ENCODE measurements at regions of chr10 and their contacts with region 1.

Region 1: DNA sequence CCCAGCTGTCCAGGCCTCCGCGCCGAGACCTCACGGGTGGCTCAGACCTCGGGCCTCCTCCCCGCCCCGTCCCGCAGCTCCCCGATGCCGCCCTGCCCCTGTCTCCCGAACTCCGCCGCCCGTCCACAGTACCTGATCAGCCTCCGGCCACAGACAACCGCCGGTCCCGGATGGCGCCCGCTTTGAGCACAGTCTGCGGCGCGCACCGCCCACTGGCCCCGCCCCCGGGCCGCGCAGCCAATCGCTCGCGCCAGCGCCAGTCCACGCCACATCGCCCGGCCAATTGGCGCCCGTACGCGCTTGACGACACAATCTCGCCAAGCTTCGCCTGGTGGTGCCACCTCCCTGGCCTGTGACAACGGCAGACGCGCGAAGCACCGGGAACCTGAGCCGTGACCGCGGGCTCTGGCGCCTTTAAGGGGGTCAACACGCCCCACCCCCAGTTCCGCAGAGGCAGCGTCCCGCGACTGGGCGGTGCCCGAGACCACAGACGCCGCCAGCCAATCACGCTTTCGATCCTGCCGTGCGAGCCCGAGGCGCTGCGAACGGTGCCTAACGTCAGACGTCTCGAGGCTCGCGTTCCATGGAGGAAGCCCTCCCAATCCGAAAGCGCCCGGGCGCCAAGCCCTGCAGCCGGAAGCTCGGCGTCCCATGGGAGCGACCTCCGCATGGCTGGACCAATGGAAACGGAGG is at the start of gene IDI1:
- DNase-seq: peak; percentile 97 to 99 (median 98)
- H3K4me3 ChIP-seq: peak within 1 kb of the TSS; percentile 66 to 79
- H3K4me3 Mint-ChIP-seq: peak within 1 kb of the TSS; percentile 92 to 98 (median 95)
- H3K27ac ChIP-seq: peak within 1 kb of the TSS; percentile 96
- H3K27ac Mint-ChIP-seq: peak within 1 kb of the TSS; percentile 98 to 99 (median 99)
- H3K4me1 ChIP-seq: peaks cover 70% of the 10 kb centered on the region
- H3K4me1 Mint-ChIP-seq: peaks cover 46 to 90% (median 61%) of the 10 kb centered on the region in 4 donors
- H3K27me3 ChIP-seq: no peaks in the 10 kb centered on the region
- H3K27me3 Mint-ChIP-seq: no peaks in the 10 kb centered on the region
- total RNA-seq, gene IDI1: 30.3 to 32.4 TPM

Region 2: GRCh38 chr10:931416-932318 is 117.2 kb before region 1 on chr10 and contains the start of gene LARP4B:
- CTCF ChIA-PET with region 1: no interaction called
- POLR2A ChIA-PET with region 1: interaction called, 22 read pairs
- intact Hi-C with region 1: loop called (anchors 1 kb)
- DNase-seq: peak; percentile 94 to 99 (median 98)
- H3K4me3 ChIP-seq: peak within 1 kb of the TSS; percentile 38 to 67
- H3K4me3 Mint-ChIP-seq: peak within 1 kb of the TSS; percentile 93 to 99 (median 95)
- H3K27ac ChIP-seq: peak within 1 kb of the TSS; percentile 73
- H3K27ac Mint-ChIP-seq: peak within 1 kb of the TSS; percentile 78 to 98 (median 97)
- H3K4me1 ChIP-seq: peaks cover 38% of the 10 kb centered on the region
- H3K4me1 Mint-ChIP-seq: peaks cover 23 to 43% (median 33%) of the 10 kb centered on the region in 4 donors
- H3K27me3 ChIP-seq: no peaks in the 10 kb centered on the region
- H3K27me3 Mint-ChIP-seq: no peaks in the 10 kb centered on the region
- total RNA-seq, gene LARP4B: 94.9 to 99.7 TPM

Region 3: DNA sequence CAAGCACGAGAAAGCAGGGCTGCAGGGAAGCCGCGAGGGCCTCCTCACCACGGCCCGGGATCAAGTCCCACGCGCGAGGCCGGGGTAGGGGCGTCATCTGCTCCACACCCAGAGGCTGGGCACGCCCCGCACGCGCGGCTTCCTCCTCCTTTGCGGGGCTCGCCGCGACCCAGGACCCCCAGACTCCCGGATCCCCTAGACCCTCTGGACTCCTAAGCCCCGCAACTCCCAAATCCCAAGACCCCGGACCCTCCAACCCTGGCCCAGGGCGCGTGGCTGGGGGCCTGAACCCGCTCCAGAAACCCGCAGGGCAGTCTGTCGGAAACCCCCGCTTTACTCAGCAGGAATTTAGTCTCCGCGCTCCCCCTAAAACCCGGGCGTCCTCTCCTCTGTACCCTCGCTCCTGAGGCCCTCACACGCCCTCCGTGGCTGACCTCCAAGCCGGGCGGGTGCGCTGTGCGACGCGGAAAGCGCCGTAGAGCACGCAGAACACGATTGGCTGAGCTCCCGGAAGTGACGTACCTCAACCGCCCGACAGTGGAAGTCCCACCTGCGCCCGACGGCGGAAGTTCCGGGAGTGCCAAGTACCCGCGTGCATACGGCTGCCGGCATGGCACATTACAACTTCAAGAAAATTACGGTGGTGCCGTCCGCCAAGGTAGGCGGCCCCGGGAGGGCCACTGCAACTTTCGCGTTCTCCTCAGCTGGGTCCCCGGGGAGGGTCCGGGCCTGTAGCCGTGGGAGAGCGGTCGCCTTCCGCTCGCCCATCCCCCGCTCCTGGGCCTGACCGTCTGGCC is 60.8 kb before region 1 on chr10 and contains the start of gene GTPBP4:
- CTCF ChIA-PET with region 1: interaction called, 3 read pairs
- POLR2A ChIA-PET with region 1: interaction called, 10 read pairs
- intact Hi-C with region 1: loop called (anchors 1 kb)
- DNase-seq: peak; percentile 91 to 98 (median 96)
- H3K4me3 ChIP-seq: peak within 1 kb of the TSS; percentile 82 to 95
- H3K4me3 Mint-ChIP-seq: peak within 1 kb of the TSS; percentile 91 to 99 (median 95)
- H3K27ac ChIP-seq: peak within 1 kb of the TSS; percentile 83
- H3K27ac Mint-ChIP-seq: peak within 1 kb of the TSS; percentile 96 to 99 (median 98)
- H3K4me1 ChIP-seq: peaks cover 30% of the 10 kb centered on the region
- H3K4me1 Mint-ChIP-seq: peaks cover 23 to 47% (median 33%) of the 10 kb centered on the region in 4 donors
- H3K27me3 ChIP-seq: no peaks in the 10 kb centered on the region
- H3K27me3 Mint-ChIP-seq: no peaks in the 10 kb centered on the region
- total RNA-seq, gene GTPBP4: 46.0 to 47.0 TPM

Region 4: GRCh38 chr10:1036341-1036791 is 12.5 kb before region 1 on chr10:
- CTCF ChIA-PET with region 1: interaction called, 4 read pairs
- POLR2A ChIA-PET with region 1: interaction called, 17 read pairs
- intact Hi-C with region 1: no loop called
- DNase-seq: peak in 2 of 5 donors; percentile 22 to 61
- H3K4me3 ChIP-seq: no peak overlapping the region
- H3K4me3 Mint-ChIP-seq: peak overlapping the region in 2 of 8 donors; percentile 8 to 41
- H3K27ac ChIP-seq: no peak overlapping the region
- H3K27ac Mint-ChIP-seq: peak overlapping the region in 2 of 7 donors; percentile 49 to 51
- H3K4me1 ChIP-seq: no peaks in the 10 kb centered on the region
- H3K4me1 Mint-ChIP-seq: peaks cover 0 to 13% (median 9%) of the 10 kb centered on the region in 4 donors
- H3K27me3 ChIP-seq: no peaks in the 10 kb centered on the region
- H3K27me3 Mint-ChIP-seq: no peaks in the 10 kb centered on the region

Region 5: DNA sequence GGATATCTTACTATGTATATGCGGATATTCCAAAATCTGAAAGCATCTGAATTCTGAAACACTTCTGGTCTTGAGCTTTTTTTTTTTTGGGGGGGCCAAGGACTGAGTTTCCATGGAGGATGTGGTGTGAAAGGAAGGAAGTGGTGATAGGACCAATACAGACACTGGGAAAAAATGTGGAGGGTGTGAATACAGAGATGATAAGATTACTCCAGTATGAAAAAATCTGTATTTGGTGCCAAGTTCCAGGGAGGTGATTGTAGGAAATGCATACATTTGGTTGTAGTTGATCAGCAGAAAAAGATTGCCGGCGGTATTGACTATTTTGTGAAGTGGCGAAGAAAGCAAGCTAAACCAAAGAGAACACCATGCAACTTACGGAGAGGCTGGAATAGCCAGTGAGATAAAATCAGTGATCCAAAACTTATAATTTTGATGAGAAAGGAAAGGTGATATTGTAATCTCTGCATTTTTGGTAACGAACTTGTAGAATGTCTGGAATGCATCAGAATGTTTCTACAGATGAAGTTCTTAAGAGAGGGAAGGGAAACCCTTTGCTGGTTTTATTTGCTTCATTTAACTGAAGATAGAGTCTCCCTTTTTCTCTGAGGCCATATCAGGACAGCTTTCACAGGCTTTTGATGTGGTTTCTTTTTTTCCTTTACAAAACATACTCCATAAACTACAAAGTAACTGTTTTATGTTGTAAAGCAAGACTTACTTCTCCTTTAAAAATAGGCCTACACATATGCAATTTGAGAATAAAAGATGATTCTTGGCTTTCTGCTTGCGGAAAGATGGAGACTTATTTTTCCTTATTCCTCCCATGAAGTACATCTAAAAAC is 13.3 kb after region 1 on chr10:
- CTCF ChIA-PET with region 1: interaction called, 5 read pairs
- POLR2A ChIA-PET with region 1: interaction called, 33 read pairs
- intact Hi-C with region 1: loop called (anchors 2 kb)
- DNase-seq: peak in 1 of 5 donors; percentile 37
- H3K4me3 ChIP-seq: peak overlapping the region in 1 of 2 donors; percentile 24
- H3K4me3 Mint-ChIP-seq: peak overlapping the region; percentile 70 to 83 (median 77)
- H3K27ac ChIP-seq: peak overlapping the region; percentile 47
- H3K27ac Mint-ChIP-seq: peak overlapping the region; percentile 84 to 99 (median 92)
- H3K4me1 ChIP-seq: peaks cover 83% of the 10 kb centered on the region
- H3K4me1 Mint-ChIP-seq: peaks cover 56 to 88% (median 78%) of the 10 kb centered on the region in 4 donors
- H3K27me3 ChIP-seq: no peaks in the 10 kb centered on the region
- H3K27me3 Mint-ChIP-seq: no peaks in the 10 kb centered on the region

Region 6: DNA sequence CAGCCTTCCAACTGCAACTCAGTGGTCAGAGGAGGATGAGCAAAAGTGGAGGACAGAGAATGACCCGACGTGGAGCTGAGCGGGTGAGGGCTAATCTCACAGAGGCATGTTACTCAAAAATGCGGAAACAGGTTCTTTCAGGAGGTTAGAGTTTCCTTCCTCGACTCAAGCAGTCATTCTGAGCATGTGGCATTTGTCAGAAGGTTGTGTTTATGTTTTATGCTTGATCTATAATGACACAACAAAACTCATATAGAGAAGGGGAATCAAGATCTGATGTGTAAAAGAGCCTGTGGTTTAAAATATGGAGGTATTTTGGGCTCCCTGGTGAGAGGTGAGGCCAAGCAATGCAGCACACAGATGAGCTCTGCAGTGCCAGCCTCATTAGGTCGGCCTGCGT is 377.0 kb after region 1 on chr10:
- CTCF ChIA-PET with region 1: no interaction called
- POLR2A ChIA-PET with region 1: no interaction called
- intact Hi-C with region 1: no loop called
- DNase-seq: no peak
- H3K4me3 ChIP-seq: no peak overlapping the region
- H3K4me3 Mint-ChIP-seq: no peak overlapping the region
- H3K27ac ChIP-seq: no peak overlapping the region
- H3K27ac Mint-ChIP-seq: no peak overlapping the region
- H3K4me1 ChIP-seq: no peaks in the 10 kb centered on the region
- H3K4me1 Mint-ChIP-seq: peaks cover 0 to 5% (median 2%) of the 10 kb centered on the region in 4 donors
- H3K27me3 ChIP-seq: no peaks in the 10 kb centered on the region
- H3K27me3 Mint-ChIP-seq: peaks cover 18 to 23% of the 10 kb centered on the region in 2 donors

Region 7: DNA sequence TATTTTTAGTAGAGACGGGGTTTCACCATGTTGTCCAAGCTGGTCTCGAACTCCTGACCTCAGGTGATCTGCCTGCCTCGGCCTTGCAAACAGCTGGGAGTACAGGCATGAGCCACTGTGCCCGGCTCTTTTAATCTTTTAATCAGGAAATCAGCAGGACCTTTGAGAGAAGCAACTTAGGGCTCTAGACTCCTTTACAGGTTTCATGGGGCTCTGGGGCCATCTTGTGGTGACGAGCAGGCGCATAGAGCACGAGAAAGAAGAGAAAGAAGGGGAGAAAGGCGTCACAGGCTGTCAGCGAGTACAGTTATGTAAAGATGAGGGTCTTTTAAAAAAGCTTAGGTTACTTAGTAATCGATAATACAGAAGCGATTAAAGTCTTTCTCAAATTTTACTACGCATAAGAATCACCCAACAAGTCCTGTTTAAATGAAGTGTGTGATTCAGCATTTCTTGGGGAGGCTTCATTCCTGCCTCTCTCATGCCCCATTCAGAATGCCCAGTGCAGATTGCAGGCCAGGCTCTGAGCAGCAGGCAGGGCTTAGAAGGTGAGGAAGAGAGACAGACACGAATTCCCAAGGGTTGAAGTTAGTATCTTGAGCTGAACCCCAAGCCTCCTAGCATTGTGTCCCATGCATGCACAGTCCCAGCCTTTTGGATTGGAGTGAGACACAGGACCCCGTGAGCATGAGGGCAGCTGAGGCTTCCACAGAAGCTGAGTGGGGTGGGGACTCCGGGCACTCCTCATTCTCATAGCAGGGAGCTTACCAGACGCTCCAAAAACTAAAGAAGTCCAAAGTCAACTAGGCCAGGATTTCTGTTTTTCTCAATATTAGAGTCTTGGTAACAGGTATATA is 1994.9 kb after region 1 on chr10:
- CTCF ChIA-PET with region 1: no interaction called
- POLR2A ChIA-PET with region 1: no interaction called
- intact Hi-C with region 1: loop called (anchors 10 kb)
- DNase-seq: peak in 4 of 5 donors; percentile 21 to 40 (median 22)
- H3K4me3 ChIP-seq: no peak overlapping the region
- H3K4me3 Mint-ChIP-seq: peak overlapping the region in 1 of 8 donors; percentile 2
- H3K27ac ChIP-seq: no peak overlapping the region
- H3K27ac Mint-ChIP-seq: peak overlapping the region in 2 of 7 donors; percentile 41 to 53
- H3K4me1 ChIP-seq: no peaks in the 10 kb centered on the region
- H3K4me1 Mint-ChIP-seq: peaks cover 0 to 5% (median 0%) of the 10 kb centered on the region in 4 donors
- H3K27me3 ChIP-seq: peaks cover 3% of the 10 kb centered on the region
- H3K27me3 Mint-ChIP-seq: peaks cover 13 to 17% of the 10 kb centered on the region in 2 donors

Measured in CD4-positive, alpha-beta memory T cell (primary cell).